WTC11 (cell line): ENCODE measurements at regions of chr2 and their contacts with region 1.

Region 1: GRCh38 chr2:231399853-231400680 is 4.6 kb downstream of the B3GNT7 start:
- DNase-seq: no peak
- ATAC-seq: peak; percentile 16
- H3K4me3 Mint-ChIP-seq: no peak overlapping the region
- H3K27ac Mint-ChIP-seq: peak overlapping the region; percentile 86
- H3K4me1 Mint-ChIP-seq: peaks cover 71% of the 10 kb centered on the region
- H3K27me3 Mint-ChIP-seq: no peaks in the 10 kb centered on the region
- CTCF ChIP-seq: no peak

Region 2: GRCh38 chr2:231227309-231228162 is 172.5 kb before region 1 on chr2:
- CTCF ChIA-PET with region 1: interaction called, 37 read pairs
- POLR2A ChIA-PET with region 1: no interaction called
- DNase-seq: peak; percentile 51
- ATAC-seq: peak; percentile 93
- H3K4me3 Mint-ChIP-seq: no peak overlapping the region
- H3K27ac Mint-ChIP-seq: peak overlapping the region; percentile 77
- H3K4me1 Mint-ChIP-seq: peaks cover 21% of the 10 kb centered on the region
- H3K27me3 Mint-ChIP-seq: no peaks in the 10 kb centered on the region
- CTCF ChIP-seq: peak; percentile 50

Region 3: DNA sequence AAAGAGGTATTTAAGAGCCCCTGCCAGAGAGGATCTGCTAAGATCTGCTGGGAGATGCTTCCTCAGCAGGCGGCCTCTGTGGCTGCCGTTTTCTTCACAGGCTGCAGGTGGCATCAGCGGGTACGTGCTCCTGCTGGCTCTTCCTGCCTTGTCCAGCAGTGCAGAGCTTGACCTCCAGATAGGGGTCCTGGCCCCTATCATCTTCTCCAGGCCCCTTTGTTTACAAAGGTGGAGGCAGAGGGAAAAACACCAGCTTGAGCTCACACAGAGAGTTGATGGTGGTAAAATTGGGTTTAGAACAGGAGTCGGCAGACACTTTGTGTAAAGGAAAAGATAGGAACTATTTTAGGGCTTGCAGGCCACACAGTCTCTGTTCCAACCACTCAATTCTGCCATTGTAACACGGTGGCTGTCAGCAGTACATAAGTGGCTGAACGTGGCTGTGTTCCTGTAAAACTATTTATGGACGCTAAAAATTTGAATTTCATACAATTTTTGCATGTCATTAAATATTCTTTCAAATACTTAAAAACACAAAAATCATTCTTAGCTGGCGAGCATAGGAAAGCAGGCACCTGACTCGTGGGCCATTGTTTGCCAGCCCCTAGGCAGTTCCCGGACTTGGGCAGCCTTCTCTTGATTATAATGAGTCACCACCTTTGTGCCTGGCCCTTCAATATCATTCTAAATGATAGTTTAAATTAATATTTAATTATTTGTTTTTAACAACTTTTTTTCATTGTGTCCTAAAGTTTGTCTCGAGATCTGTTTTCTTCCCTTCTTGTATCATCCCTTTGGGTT is 102.8 kb before region 1 on chr2:
- CTCF ChIA-PET with region 1: interaction called, 14 read pairs
- POLR2A ChIA-PET with region 1: interaction called, 7 read pairs
- DNase-seq: peak; percentile 73
- ATAC-seq: peak; percentile 96
- H3K4me3 Mint-ChIP-seq: no peak overlapping the region
- H3K27ac Mint-ChIP-seq: peak overlapping the region; percentile 94
- H3K4me1 Mint-ChIP-seq: peaks cover 28% of the 10 kb centered on the region
- H3K27me3 Mint-ChIP-seq: no peaks in the 10 kb centered on the region
- CTCF ChIP-seq: 0 out of 2 replicates have a peak, but pooled peaks have one; percentile 35

Region 4: DNA sequence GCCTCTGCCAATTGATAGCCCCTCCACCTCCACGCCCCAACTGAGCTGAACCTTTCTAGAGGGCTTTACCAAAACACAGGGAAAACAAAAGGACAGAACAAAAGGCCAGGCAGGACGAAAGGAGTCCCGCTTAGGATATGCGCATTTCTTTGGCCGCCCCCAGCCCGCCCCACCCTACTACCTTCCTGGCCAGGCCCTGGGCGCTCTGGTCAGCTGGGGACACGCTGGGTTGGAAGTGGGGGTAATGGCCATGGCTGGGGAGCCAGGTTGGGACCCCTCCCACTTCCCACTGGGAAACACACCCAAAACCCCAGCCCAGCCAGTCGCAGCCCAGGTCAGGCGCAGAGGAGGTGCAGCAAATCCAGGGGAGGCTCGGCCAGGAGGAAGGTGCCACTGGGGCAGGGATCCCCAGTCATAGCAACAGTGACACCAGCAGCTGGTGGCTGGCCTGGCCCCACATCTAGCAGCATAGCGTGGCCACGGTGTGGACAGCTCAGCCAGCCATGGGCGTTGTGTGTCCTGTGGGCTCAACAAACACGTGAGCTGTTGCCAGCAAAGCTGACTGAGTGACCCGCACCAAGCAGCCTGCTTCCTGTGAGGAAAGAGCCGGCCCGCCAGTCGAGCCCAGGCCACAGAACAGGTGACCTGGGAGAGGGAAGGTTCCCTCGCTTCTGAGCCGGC is 29.2 kb before region 1 on chr2:
- CTCF ChIA-PET with region 1: interaction called, 33 read pairs
- POLR2A ChIA-PET with region 1: no interaction called
- DNase-seq: peak; percentile 66
- ATAC-seq: peak; percentile 71
- H3K4me3 Mint-ChIP-seq: peak overlapping the region; percentile 36; the same call in 1 of the 2 replicates
- H3K27ac Mint-ChIP-seq: peak overlapping the region; percentile 98
- H3K4me1 Mint-ChIP-seq: peaks cover 73% of the 10 kb centered on the region
- H3K27me3 Mint-ChIP-seq: no peaks in the 10 kb centered on the region
- CTCF ChIP-seq: no peak

Region 5: DNA sequence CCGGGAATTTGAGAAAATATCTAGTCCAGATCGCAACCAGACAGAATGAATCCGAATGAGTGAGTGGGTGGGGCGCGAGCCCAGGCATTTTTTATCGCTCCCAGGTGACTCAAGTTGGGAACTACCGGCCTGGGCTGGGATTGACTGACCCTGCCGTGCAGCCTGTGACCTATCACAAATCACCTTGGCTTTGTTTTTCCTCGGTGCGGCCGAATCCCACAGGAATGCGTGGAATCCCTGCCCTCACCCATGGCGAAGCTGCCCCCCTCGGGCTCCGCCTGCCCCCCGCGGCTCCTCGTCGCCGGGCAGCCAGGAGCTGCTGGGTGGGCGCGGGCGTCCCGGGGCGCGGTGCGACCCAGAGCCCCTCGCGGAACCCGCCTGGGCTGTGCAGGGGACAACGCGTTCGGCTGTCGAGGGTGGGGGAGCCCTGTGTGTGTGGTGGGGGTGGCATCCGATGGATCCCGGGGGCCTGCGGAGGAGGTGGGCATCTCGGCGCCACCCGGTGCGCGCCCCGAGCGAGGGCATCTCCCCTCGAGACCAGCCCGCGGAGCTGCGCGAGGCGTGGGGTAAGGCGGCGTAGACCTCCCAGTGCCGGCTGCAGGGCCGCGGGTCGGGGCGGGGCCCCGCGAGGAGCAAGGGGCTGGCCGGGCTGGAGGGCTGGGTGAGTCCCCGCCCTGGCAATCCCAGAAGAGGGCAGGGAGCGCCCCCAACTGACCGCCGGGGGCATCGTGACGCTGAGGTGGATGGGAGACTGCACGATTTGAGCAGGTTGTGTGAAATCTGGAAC is 12.0 kb after region 1 on chr2:
- CTCF ChIA-PET with region 1: interaction called, 19 read pairs
- POLR2A ChIA-PET with region 1: interaction called, 8 read pairs
- DNase-seq: peak; percentile 95
- ATAC-seq: peak; percentile 85
- H3K4me3 Mint-ChIP-seq: peak overlapping the region; percentile 69
- H3K27ac Mint-ChIP-seq: peak overlapping the region; percentile 99
- H3K4me1 Mint-ChIP-seq: peaks cover 60% of the 10 kb centered on the region
- H3K27me3 Mint-ChIP-seq: no peaks in the 10 kb centered on the region
- CTCF ChIP-seq: peak; percentile 76